ENCODE measurements at regions of chr15 and their contacts with region 1.

Region 1: DNA sequence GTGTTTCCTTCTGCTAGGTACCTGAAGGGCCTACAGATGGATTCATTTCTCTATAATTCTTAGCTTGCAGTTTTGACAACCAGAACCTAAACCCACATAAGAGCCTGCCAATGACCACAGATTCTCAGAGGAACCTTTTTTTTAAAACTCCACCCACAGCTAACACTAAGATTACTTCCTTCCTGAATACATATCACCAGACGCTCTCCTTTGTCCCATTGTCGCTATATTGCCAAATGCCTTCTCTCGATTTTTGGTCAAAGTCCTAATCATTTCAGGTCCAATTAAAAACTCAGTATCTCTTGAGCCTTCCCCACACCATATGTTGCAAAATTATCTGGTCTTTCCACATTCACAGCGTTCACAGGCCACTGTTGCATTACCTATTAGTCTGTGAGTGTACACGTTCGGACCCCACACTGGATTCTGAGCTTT is 12.4 kb downstream of the ZNF710 start:
- DNase-seq: no peak
- ATAC-seq: peak; percentile 58
- H3K4me3 ChIP-seq: 0 out of 2 replicates have a peak overlapping the region, but pooled peaks have one; percentile 34
- H3K27ac ChIP-seq: peak overlapping the region; percentile 15
- H3K4me1 ChIP-seq: peaks cover 16% of the 10 kb centered on the region
- H3K27me3 ChIP-seq: no peaks in the 10 kb centered on the region
- CTCF ChIP-seq: no peak
- EP300 ChIP-seq: no peak
- POLR2A ChIP-seq: no peak
- RAD21 ChIP-seq: no peak

Region 2: DNA sequence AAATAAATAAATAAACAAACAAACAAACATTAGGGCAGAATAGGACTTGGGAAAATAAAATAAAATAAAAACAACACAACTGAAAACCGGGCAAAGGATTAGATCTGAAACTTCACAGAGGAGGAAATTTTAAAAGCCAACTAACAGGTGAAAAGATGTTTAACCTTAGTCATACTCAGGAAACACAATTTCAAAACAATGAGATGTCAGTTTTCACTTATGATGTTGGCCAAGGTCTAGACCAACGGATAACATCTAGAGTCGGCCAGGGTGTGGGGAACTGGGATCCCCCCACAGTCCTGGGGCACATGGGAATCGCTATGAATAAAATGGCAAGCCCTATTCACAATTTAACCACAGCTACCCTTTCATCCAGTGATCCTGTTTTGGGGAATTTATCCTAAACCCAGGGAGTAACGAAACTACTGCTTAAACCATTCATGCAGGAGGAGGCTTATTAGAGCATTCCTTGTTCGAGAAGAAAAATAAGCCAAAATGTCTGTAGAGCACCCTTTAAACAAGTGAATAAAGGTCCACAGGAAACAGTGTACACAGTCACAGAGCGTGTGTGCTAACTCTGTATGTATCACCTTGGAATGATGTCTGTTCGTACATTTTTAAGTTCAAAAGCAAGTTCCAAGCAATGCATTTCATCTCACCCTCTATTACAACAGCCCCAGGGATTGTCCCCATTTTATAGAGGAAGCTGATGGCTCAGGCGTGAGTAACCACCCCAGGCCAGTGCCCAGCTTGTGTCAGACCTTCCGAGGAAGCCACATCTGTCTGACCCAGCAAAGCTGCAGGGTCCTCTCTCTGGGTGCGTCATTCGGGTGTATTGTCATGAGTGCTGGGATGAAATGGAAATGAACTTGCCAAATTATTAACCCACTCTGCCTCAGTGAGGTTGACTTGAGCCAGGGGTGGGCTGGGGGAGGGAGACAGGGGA is 192.6 kb before region 1 on chr15:
- CTCF ChIA-PET with region 1: no interaction called
- POLR2A ChIA-PET with region 1: no interaction called
- RAD21 ChIA-PET with region 1: no interaction called
- SMC1A ChIA-PET with region 1: no interaction called
- in situ Hi-C with region 1: no loop called
- intact Hi-C with region 1: no loop called
- DNase-seq: no peak
- ATAC-seq: no peak; the same call in 2 of the 3 replicates
- H3K4me3 ChIP-seq: no peak overlapping the region
- H3K27ac ChIP-seq: no peak overlapping the region
- H3K4me1 ChIP-seq: peaks cover 6% of the 10 kb centered on the region
- H3K27me3 ChIP-seq: peaks cover 0 to 2% of the 10 kb centered on the region in 2 experiments; a peak in 1 of 4 replicates
- CTCF ChIP-seq: no peak
- EP300 ChIP-seq: no peak
- POLR2A ChIP-seq: no peak
- RAD21 ChIP-seq: no peak

Region 3: GRCh38 chr15:89845305-89845893 is 168.1 kb before region 1 on chr15:
- CTCF ChIA-PET with region 1: no interaction called
- POLR2A ChIA-PET with region 1: no interaction called
- RAD21 ChIA-PET with region 1: no interaction called
- SMC1A ChIA-PET with region 1: no interaction called
- in situ Hi-C with region 1: no loop called
- intact Hi-C with region 1: no loop called
- DNase-seq: no peak
- ATAC-seq: no peak
- H3K4me3 ChIP-seq: no peak overlapping the region
- H3K27ac ChIP-seq: peak overlapping the region; percentile 13; the same call in 1 of the 2 replicates
- H3K4me1 ChIP-seq: peaks cover 35% of the 10 kb centered on the region
- H3K27me3 ChIP-seq: no peaks in the 10 kb centered on the region
- CTCF ChIP-seq: no peak
- EP300 ChIP-seq: no peak
- POLR2A ChIP-seq: no peak
- RAD21 ChIP-seq: no peak

Region 4: DNA sequence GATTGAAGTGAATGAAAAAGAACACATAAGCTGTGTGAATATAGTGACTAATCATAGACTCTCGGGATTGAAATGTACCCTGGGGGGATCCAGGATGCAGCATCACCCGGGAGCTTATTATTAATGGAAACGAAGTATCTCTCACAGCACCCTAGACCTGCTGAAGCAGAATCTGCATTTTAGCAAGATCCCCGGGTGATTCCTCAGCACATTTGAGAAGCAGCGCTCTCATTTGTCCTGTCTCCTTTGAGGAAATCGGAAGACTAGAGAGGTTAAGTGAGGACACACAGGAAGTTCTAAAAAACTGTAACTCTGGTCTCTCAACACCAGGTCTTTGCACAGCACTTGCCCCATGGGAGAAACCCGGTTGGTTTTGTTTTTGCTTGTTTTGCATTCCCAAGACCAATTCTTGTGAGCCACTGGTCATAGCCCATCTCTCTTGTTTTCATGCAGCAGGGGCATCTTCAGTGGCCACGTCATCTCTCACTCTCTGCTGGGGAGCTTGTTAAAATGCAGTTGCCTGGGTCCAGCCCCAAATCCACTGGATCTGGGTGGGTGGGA is 17.8 kb after region 1 on chr15:
- CTCF ChIA-PET with region 1: interaction called, 15 read pairs
- POLR2A ChIA-PET with region 1: interaction called, 12 read pairs
- RAD21 ChIA-PET with region 1: interaction called, 6 read pairs
- SMC1A ChIA-PET with region 1: interaction called, 224 read pairs
- in situ Hi-C with region 1: no loop called
- intact Hi-C with region 1: no loop called
- DNase-seq: peak; percentile 95
- ATAC-seq: peak; percentile 92
- H3K4me3 ChIP-seq: peak overlapping the region; percentile 12; the same call in 1 of the 2 replicates
- H3K27ac ChIP-seq: peak overlapping the region; percentile 75
- H3K4me1 ChIP-seq: peaks cover 41% of the 10 kb centered on the region
- H3K27me3 ChIP-seq: no peaks in the 10 kb centered on the region
- CTCF ChIP-seq: no peak
- EP300 ChIP-seq: peak; percentile 60 to 83; a peak in 3 of 4 replicates
- POLR2A ChIP-seq: 0 out of 2 replicates have a peak, but pooled peaks have one; percentile 17
- RAD21 ChIP-seq: 0 out of 2 replicates have a peak, but pooled peaks have one; percentile 6

Measured in GM12878 (cell line).